Sciatic nerve (tissue), 2 donors: ENCODE measurements at regions of chr20 and their contacts with region 1.

Region 1: GRCh38 chr20:23520185-23520584 is 29.3 kb downstream of the CST8 start:
- DNase-seq: no peak
- ATAC-seq: no peak

Region 2: DNA sequence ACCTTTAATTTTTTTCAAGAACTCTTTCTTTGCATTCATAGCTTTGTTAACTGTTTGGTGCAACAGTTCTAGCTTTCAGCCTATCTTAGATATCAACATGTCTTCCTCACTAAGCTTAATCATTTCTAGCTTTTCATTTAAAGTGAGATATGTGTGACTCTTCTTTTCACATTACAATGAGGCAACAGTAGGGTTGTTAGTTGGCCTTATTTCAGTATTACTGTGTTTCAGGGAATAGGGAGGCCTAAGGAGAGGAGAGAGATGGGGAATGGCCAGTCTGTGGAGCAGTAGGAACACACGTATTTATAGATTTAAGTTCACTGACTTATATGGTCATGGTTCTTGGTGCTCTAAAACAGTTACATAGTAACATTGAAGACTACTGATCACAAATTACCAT is 12.3 kb after region 1 on chr20:
- intact Hi-C with region 1: loop called (anchors 1 kb)
- DNase-seq: no peak
- ATAC-seq: no peak